ENCODE measurements at regions of chr19 and their contacts with region 1.

Region 1: DNA sequence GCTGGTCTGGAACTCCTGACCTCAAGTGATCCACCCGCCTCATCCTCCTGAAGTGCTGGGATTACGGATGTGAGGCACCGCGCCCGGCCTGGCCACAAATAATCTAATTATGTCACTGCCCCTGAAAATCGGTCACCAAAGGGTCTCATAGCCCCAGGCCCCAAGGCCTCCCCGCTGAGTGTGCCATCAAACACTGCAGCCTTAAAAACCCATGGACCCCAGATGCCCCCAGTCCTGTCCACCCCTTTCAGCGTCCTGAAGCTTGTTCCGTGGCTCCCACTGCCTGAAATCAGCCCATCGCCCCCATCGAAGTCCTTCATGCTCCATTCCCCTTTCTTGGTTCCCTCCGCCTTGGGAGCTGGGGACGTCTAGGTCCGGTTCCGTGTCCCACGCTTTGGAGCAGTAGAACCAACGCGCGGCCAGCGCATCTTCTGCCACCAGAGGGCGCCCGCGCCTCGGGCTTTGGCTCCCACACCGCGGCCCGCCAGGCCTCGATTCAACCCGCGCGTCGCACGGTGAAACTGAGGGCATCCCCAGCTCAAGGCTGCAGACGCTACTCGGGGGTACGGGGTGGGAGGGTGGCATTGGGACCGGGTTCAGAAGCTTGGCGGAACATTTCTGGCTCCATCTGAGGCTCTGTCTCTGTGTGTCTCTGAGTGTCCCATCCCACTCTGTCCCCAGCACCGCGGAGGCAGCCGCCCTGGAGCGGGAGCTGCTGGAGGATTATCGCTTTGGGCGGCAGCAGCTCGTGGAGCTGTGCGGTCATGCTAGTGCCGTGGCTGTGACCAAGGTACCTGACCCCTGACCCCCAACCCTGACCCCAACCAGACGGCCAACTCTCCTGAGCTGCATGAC is 3.5 kb downstream of the YJEFN3 start:
- DNase-seq: peak; percentile 96
- ATAC-seq: peak; percentile 70

Region 2: GRCh38 chr19:19488875-19489690 is 43.1 kb before region 1 on chr19:
- intact Hi-C with region 1: no loop called
- DNase-seq: peak; percentile 90
- ATAC-seq: peak; percentile 61

Region 3: GRCh38 chr19:19546751-19547176 is 14.6 kb after region 1 on chr19:
- intact Hi-C with region 1: loop called (anchors 2 kb)
- DNase-seq: peak; percentile 79
- ATAC-seq: peak; percentile 76

Region 4: GRCh38 chr19:19554074-19555023 is 22.2 kb after region 1 on chr19:
- intact Hi-C with region 1: loop called (anchors 1 kb)
- DNase-seq: peak; percentile 88
- ATAC-seq: peak; percentile 47

Region 5: DNA sequence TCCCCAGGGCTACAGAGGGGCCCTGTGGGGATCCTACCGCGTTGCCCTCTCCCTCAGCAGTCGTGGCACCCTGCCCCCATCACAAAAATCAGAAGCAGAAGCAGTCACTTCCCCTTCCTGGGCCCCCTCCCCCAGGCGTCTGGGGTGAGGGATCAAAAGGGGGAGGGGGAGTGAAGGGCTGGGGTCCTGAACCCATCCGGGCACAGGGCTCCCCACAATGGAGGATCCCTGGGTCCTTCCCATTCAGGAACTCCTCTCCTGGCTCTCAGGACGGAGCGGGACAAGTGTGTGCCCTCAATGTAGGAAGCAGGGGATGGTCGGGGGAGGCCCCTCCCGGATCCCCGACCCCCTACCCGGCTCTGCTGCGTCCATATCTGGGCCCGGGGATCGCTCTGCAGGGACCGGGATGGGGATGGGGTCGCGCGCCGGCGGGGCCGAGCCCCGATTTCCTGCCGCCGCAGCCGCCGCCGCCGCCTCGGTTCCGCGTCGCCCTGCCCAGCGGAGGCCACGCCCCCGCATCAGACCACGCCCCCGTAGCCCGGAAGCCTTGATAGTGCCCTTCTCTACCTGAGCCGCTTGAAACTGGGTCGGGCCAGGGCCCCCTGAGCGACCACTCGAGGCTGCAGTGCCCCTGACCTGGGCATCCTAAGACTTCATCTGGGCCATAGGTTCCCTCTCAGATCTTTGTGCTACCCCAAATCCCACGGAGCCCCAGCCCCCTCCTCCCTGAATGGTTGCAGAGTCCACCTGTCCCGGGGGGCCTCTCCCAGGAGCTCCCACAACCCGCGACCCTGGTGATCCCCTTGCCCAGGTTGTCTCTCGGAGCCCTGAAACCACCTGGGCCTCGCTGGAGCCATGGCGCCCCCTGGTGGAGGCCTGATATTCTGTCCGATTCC is 111.2 kb after region 1 on chr19 and contains the start of gene GMIP:
- intact Hi-C with region 1: loop called (anchors 2 kb)
- DNase-seq: peak; percentile 93
- ATAC-seq: peak; percentile 82
- total RNA-seq, gene GMIP: 4.5 TPM

Region 6: DNA sequence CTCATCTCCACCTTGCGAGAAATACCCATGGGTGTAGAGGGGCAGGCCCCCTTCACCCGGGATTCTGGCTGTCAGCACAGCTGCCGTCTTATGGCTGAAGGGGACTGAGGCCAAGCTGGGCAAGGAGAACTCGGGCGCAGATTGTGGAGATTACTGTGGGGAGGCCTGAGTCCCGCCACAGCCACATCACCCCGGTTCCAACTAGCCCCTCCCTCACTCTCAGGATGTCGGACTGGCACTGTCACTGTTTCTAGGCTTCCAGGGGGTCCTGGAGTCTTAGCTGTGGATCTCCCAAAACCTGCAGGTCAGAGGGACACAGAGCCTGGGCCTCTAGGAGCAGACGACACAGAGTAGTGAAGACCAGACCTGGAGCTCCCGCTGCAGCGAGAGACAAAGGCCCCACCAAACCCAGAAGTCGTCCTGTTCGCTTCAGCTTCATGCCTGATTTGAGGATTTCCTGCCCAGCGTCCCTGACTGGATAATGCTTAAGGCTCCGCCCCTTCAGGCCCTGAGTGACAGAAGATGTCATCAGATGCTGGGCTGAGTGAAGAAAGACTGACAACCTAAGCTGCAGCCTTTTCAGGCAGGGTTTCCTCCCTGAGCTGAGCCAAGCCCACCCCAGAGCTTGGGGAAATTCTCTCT is 424.4 kb after region 1 on chr19:
- intact Hi-C with region 1: loop called (anchors 2 kb)
- DNase-seq: no peak
- ATAC-seq: no peak